Endothelial cell of umbilical vein (primary cell): ENCODE measurements at regions of chr16 and their contacts with region 1.

Region 1: GRCh38 chr16:30602616-30603277 is 7.4 kb downstream of the ZNF689 start:
- DNase-seq: no peak
- H3K4me3 ChIP-seq: no peak overlapping the region
- H3K27ac ChIP-seq: no peak overlapping the region
- H3K4me1 ChIP-seq: no peaks in the 10 kb centered on the region
- H3K27me3 ChIP-seq: no peaks in the 10 kb centered on the region
- CTCF ChIP-seq: no peak
- POLR2A ChIP-seq: no peak

Region 2: DNA sequence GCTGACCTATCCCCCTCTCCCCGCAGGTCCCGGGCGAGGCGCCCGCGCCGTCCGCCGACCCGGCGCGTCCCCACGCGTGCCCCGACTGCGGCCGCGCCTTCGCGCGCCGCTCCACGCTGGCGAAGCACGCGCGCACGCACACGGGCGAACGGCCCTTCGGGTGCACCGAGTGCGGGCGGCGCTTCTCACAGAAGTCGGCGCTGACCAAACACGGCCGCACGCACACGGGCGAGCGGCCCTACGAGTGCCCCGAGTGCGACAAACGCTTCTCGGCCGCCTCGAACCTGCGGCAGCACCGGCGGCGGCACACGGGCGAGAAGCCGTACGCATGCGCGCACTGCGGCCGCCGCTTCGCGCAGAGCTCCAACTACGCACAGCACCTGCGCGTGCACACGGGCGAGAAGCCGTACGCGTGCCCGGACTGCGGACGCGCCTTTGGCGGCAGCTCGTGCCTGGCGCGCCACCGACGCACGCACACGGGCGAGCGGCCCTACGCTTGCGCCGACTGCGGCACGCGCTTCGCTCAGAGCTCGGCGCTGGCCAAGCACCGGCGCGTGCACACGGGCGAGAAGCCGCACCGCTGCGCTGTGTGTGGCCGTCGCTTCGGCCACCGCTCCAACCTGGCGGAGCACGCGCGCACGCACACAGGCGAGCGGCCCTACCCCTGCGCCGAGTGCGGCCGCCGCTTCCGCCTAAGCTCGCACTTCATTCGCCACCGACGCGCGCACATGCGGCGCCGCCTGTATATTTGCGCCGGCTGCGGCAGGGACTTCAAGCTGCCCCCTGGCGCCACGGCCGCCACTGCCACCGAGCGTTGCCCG is 185.0 kb before region 1 on chr16:
- CTCF ChIA-PET with region 1: interaction called, 12 read pairs
- POLR2A ChIA-PET with region 1: no interaction called
- dilution Hi-C with region 1: no loop called
- intact Hi-C with region 1: no loop called
- DNase-seq: peak; percentile 96
- H3K4me3 ChIP-seq: peak overlapping the region in 2 of 3 experiments; percentile 44 to 57
- H3K27ac ChIP-seq: no peak overlapping the region
- H3K4me1 ChIP-seq: peaks cover 3% of the 10 kb centered on the region
- H3K27me3 ChIP-seq: no peaks in the 10 kb centered on the region
- CTCF ChIP-seq: peak in 1 of 2 donors; percentile 37
- POLR2A ChIP-seq: peak; percentile 42

Region 3: GRCh38 chr16:30445408-30446202 is 157.1 kb before region 1 on chr16 and contains the start of gene SEPHS2:
- CTCF ChIA-PET with region 1: interaction called, 47 read pairs
- POLR2A ChIA-PET with region 1: no interaction called
- dilution Hi-C with region 1: no loop called
- intact Hi-C with region 1: loop called (anchors 1 kb)
- DNase-seq: peak; percentile 97
- H3K4me3 ChIP-seq: peak within 1 kb of the TSS; percentile 57 to 79 (median 68)
- H3K27ac ChIP-seq: peak within 1 kb of the TSS; percentile 72
- H3K4me1 ChIP-seq: peaks cover 11% of the 10 kb centered on the region
- H3K27me3 ChIP-seq: no peaks in the 10 kb centered on the region
- CTCF ChIP-seq: peak; percentile 29 to 53
- POLR2A ChIP-seq: peak; percentile 93
- total RNA-seq, gene SEPHS2: 32.0 and 32.8 TPM in 2 replicates

Region 4: GRCh38 chr16:30534368-30535105 is 68.2 kb before region 1 on chr16 and contains the start of gene ZNF747:
- CTCF ChIA-PET with region 1: interaction called, 16 read pairs
- POLR2A ChIA-PET with region 1: no interaction called
- dilution Hi-C with region 1: no loop called
- intact Hi-C with region 1: no loop called
- DNase-seq: peak; percentile 86
- H3K4me3 ChIP-seq: peak within 1 kb of the TSS; percentile 62 to 76 (median 67)
- H3K27ac ChIP-seq: peak within 1 kb of the TSS; percentile 76
- H3K4me1 ChIP-seq: peaks cover 14% of the 10 kb centered on the region
- H3K27me3 ChIP-seq: no peaks in the 10 kb centered on the region
- CTCF ChIP-seq: no peak
- POLR2A ChIP-seq: peak; percentile 76
- total RNA-seq, gene ZNF747: 7.2 and 8.6 TPM in 2 replicates

Region 5: GRCh38 chr16:30571695-30572600 is 30.8 kb before region 1 on chr16 and contains the start of gene ZNF688:
- CTCF ChIA-PET with region 1: interaction called, 11 read pairs
- POLR2A ChIA-PET with region 1: no interaction called
- dilution Hi-C with region 1: no loop called
- intact Hi-C with region 1: no loop called
- DNase-seq: peak; percentile 97
- H3K4me3 ChIP-seq: peak within 1 kb of the TSS; percentile 31 to 77 (median 76)
- H3K27ac ChIP-seq: peak within 1 kb of the TSS; percentile 78
- H3K4me1 ChIP-seq: peaks cover 16% of the 10 kb centered on the region
- H3K27me3 ChIP-seq: no peaks in the 10 kb centered on the region
- CTCF ChIP-seq: no peak
- POLR2A ChIP-seq: peak; percentile 86
- total RNA-seq, gene ZNF688: 10.5 and 10.9 TPM in 2 replicates

Region 6: GRCh38 chr16:30615358-30616091 is 12.8 kb after region 1 on chr16:
- CTCF ChIA-PET with region 1: interaction called, 47 read pairs
- POLR2A ChIA-PET with region 1: interaction called, 5 read pairs
- dilution Hi-C with region 1: no loop called
- intact Hi-C with region 1: no loop called
- DNase-seq: peak; percentile 35
- H3K4me3 ChIP-seq: no peak overlapping the region
- H3K27ac ChIP-seq: no peak overlapping the region
- H3K4me1 ChIP-seq: no peaks in the 10 kb centered on the region
- H3K27me3 ChIP-seq: peaks cover 0 to 2% of the 10 kb centered on the region in 2 experiments
- CTCF ChIP-seq: peak; percentile 58 to 68
- POLR2A ChIP-seq: no peak

Region 7: GRCh38 chr16:30700491-30700890 is 97.7 kb after region 1 on chr16:
- CTCF ChIA-PET with region 1: no interaction called
- POLR2A ChIA-PET with region 1: no interaction called
- dilution Hi-C with region 1: no loop called
- intact Hi-C with region 1: no loop called
- DNase-seq: no peak
- H3K4me3 ChIP-seq: no peak overlapping the region
- H3K27ac ChIP-seq: no peak overlapping the region
- H3K4me1 ChIP-seq: peaks cover 21% of the 10 kb centered on the region
- H3K27me3 ChIP-seq: no peaks in the 10 kb centered on the region
- CTCF ChIP-seq: no peak
- POLR2A ChIP-seq: no peak

Region 8: GRCh38 chr16:30740364-30741251 is 137.9 kb after region 1 on chr16:
- CTCF ChIA-PET with region 1: no interaction called
- POLR2A ChIA-PET with region 1: no interaction called
- dilution Hi-C with region 1: no loop called
- intact Hi-C with region 1: no loop called
- DNase-seq: peak; percentile 19
- H3K4me3 ChIP-seq: no peak overlapping the region
- H3K27ac ChIP-seq: peak overlapping the region; percentile 83
- H3K4me1 ChIP-seq: peaks cover 20% of the 10 kb centered on the region
- H3K27me3 ChIP-seq: no peaks in the 10 kb centered on the region
- CTCF ChIP-seq: no peak
- POLR2A ChIP-seq: no peak